Body of pancreas (tissue), 4 donors: ENCODE measurements at regions of chr19 and their contacts with region 1.

Region 1: GRCh38 chr19:44943801-44944249 is 1.8 kb downstream of the APOC4 start:
- DNase-seq: peak in 2 of 4 donors; percentile 21 to 75
- ATAC-seq: no peak
- H3K4me3 ChIP-seq: no peak overlapping the region
- H3K27ac ChIP-seq: no peak overlapping the region
- H3K4me1 ChIP-seq: no peaks in the 10 kb centered on the region
- H3K27me3 ChIP-seq: no peaks in the 10 kb centered on the region
- CTCF ChIP-seq: no peak
- POLR2A ChIP-seq: no peak

Region 2: DNA sequence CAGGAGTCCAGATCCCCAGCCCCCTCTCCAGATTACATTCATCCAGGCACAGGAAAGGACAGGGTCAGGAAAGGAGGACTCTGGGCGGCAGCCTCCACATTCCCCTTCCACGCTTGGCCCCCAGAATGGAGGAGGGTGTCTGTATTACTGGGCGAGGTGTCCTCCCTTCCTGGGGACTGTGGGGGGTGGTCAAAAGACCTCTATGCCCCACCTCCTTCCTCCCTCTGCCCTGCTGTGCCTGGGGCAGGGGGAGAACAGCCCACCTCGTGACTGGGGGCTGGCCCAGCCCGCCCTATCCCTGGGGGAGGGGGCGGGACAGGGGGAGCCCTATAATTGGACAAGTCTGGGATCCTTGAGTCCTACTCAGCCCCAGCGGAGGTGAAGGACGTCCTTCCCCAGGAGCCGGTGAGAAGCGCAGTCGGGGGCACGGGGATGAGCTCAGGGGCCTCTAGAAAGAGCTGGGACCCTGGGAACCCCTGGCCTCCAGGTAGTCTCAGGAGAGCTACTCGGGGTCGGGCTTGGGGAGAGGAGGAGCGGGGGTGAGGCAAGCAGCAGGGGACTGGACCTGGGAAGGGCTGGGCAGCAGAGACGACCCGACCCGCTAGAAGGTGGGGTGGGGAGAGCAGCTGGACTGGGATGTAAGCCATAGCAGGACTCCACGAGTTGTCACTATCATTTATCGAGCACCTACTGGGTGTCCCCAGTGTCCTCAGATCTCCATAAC is 38.2 kb before region 1 on chr19 and contains the start of gene APOE:
- intact Hi-C with region 1: loop called (anchors 5 kb)
- DNase-seq: peak in 1 of 4 donors; percentile 36
- ATAC-seq: no peak
- H3K4me3 ChIP-seq: no peak within 1 kb of the TSS
- H3K27ac ChIP-seq: no peak within 1 kb of the TSS
- H3K4me1 ChIP-seq: peaks cover 29% of the 10 kb centered on the region
- H3K27me3 ChIP-seq: peaks cover 0 to 11% of the 10 kb centered on the region in 2 donors
- CTCF ChIP-seq: no peak
- POLR2A ChIP-seq: peak in 1 of 3 donors; percentile 38
- total RNA-seq, gene APOE: 77.6 to 216 TPM

Region 3: GRCh38 chr19:45008552-45008951 is 64.7 kb after region 1 on chr19:
- intact Hi-C with region 1: no loop called
- DNase-seq: no peak
- ATAC-seq: no peak
- H3K4me3 ChIP-seq: no peak overlapping the region
- H3K27ac ChIP-seq: no peak overlapping the region
- H3K4me1 ChIP-seq: no peaks in the 10 kb centered on the region
- H3K27me3 ChIP-seq: no peaks in the 10 kb centered on the region
- CTCF ChIP-seq: no peak
- POLR2A ChIP-seq: no peak